Activated naive CD4-positive, alpha-beta T cell treated with anti-CD3 and anti-CD28 coated beads for 36 hours (primary cell): ENCODE measurements at regions of chr17 and their contacts with region 1.

Region 1: GRCh38 chr17:36722121-36722902 is 120.9 kb downstream of the MRM1 start:
- DNase-seq: peak; percentile 87
- H3K4me3 Mint-ChIP-seq: peak overlapping the region; percentile 85
- H3K27ac Mint-ChIP-seq: peak overlapping the region; percentile 97
- H3K4me1 Mint-ChIP-seq: peaks cover 44% of the 10 kb centered on the region
- H3K27me3 Mint-ChIP-seq: no peaks in the 10 kb centered on the region

Region 2: GRCh38 chr17:36545465-36546417 is 176.6 kb before region 1 on chr17:
- CTCF ChIA-PET with region 1: interaction called, 4 read pairs
- intact Hi-C with region 1: loop called (anchors 5 kb)
- DNase-seq: peak; percentile 98
- H3K4me3 Mint-ChIP-seq: peak overlapping the region; percentile 86
- H3K27ac Mint-ChIP-seq: peak overlapping the region; percentile 94
- H3K4me1 Mint-ChIP-seq: peaks cover 44% of the 10 kb centered on the region
- H3K27me3 Mint-ChIP-seq: no peaks in the 10 kb centered on the region

Region 3: GRCh38 chr17:36674278-36674650 is 48.0 kb before region 1 on chr17:
- CTCF ChIA-PET with region 1: no interaction called
- intact Hi-C with region 1: loop called (anchors 2 kb)
- DNase-seq: peak; percentile 74
- H3K4me3 Mint-ChIP-seq: no peak overlapping the region
- H3K27ac Mint-ChIP-seq: peak overlapping the region; percentile 73
- H3K4me1 Mint-ChIP-seq: peaks cover 30% of the 10 kb centered on the region
- H3K27me3 Mint-ChIP-seq: no peaks in the 10 kb centered on the region

Region 4: DNA sequence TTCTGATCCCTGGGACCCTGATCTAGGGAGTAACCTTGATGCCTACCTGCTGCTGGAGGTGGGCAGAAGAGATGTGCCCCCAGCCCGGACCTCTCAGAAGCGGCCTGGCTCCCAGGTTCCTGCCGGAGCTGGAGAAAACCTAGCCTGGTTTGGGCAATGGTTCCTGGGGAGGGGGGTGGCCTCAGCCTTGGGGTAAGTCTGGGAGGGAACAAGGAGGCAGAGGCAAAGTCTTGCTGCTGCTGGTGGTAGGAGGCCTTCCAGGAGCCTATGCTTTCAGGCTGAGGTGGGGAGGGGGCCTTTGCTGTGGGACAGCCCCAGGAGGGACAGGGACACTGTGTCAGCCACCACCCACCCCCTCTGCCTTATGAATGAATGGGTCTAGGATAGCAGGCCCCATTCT is 45.2 kb after region 1 on chr17:
- CTCF ChIA-PET with region 1: no interaction called
- intact Hi-C with region 1: no loop called
- DNase-seq: no peak
- H3K4me3 Mint-ChIP-seq: no peak overlapping the region
- H3K27ac Mint-ChIP-seq: no peak overlapping the region
- H3K4me1 Mint-ChIP-seq: peaks cover 12% of the 10 kb centered on the region
- H3K27me3 Mint-ChIP-seq: no peaks in the 10 kb centered on the region

Region 5: DNA sequence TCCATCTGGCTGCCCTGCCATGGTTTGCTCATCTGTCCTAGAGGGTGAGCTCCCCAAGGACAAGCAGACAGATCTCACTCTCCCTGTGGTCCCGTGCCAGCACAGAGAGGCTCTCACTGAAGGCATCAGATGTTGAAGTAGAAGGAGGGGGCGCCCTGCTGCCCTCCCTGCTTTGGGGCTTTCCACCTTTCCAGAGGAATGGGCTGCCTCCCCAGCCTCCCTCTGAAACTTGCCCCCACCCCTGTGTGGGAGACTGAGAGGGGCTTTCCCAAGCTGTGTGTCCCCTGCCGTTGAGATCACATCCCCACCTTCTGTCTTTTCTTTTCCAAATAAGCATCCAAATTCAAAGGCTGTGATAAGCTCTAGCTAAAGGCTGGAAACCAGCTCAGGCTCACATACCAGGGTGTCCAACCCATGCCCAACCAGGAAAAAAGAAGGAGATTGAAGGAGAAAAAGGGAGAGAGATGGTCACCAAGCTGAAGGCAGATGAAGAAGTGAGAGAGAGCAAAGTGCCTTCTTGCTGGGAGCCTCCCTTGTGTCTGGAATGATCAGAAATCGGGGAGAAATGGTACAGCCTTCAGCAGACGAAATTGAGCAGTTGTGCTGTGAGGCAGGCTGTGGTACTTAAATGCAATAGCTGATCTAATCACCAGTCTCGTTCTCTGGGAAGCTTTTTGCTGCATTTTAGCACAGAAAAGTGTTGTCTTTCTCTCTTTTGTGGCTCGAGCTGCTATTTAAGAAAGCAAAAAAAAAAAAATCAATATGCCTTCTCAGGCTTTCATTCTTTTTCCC is 69.0 kb after region 1 on chr17:
- CTCF ChIA-PET with region 1: no interaction called
- intact Hi-C with region 1: no loop called
- DNase-seq: no peak
- H3K4me3 Mint-ChIP-seq: no peak overlapping the region
- H3K27ac Mint-ChIP-seq: no peak overlapping the region
- H3K4me1 Mint-ChIP-seq: no peaks in the 10 kb centered on the region
- H3K27me3 Mint-ChIP-seq: peaks cover 7% of the 10 kb centered on the region

Region 6: GRCh38 chr17:36849871-36850348 is 127.6 kb after region 1 on chr17:
- CTCF ChIA-PET with region 1: no interaction called
- intact Hi-C with region 1: loop called (anchors 5 kb)
- DNase-seq: peak; percentile 80
- H3K4me3 Mint-ChIP-seq: no peak overlapping the region
- H3K27ac Mint-ChIP-seq: peak overlapping the region; percentile 79
- H3K4me1 Mint-ChIP-seq: peaks cover 29% of the 10 kb centered on the region
- H3K27me3 Mint-ChIP-seq: peaks cover 15% of the 10 kb centered on the region

Region 7: DNA sequence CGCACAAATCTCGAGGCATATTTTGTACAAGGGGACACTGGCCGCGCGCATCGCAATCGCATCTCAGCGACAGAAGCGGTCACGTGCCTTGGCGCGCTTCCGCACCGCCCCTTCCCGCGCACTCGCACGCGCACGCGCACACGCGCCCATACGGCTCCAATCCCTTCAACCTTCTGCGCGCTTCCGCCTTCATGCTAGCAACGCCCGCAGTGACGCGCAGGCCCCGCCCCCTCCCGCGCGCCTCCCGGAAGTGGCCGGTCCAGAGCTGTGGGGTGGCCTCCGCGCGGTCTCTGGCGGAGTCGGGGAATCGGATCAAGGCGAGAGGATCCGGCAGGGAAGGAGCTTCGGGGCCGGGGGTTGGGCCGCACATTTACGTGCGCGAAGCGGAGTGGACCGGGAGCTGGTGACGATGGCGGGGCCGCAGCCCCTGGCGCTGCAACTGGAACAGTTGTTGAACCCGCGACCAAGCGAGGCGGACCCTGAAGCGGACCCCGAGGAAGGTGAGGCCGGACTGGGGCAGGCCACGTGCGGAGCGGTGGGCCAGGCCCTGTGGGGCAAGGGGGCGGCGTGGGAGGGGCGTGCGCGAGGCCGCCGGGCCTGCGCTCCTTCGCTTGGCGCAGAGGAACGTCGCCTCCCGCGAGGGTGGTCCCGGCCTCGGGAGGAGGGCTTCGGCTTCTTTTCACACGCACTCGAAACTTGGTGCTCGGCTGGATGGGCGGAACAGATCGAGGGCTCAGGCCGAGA is 226.6 kb after region 1 on chr17 and contains the start of gene AATF:
- CTCF ChIA-PET with region 1: no interaction called
- intact Hi-C with region 1: loop called (anchors 1 kb)
- DNase-seq: peak; percentile 96
- H3K4me3 Mint-ChIP-seq: peak within 1 kb of the TSS; percentile 93
- H3K27ac Mint-ChIP-seq: peak within 1 kb of the TSS; percentile 87
- H3K4me1 Mint-ChIP-seq: peaks cover 39% of the 10 kb centered on the region
- H3K27me3 Mint-ChIP-seq: peaks cover 28% of the 10 kb centered on the region
- total RNA-seq, gene AATF: 58.9 to 69.8 TPM

Region 8: GRCh38 chr17:37358830-37359681 is 636.7 kb after region 1 on chr17:
- CTCF ChIA-PET with region 1: no interaction called
- intact Hi-C with region 1: loop called (anchors 1 kb)
- DNase-seq: peak; percentile 95
- H3K4me3 Mint-ChIP-seq: peak overlapping the region; percentile 86
- H3K27ac Mint-ChIP-seq: peak overlapping the region; percentile 76
- H3K4me1 Mint-ChIP-seq: peaks cover 21% of the 10 kb centered on the region
- H3K27me3 Mint-ChIP-seq: no peaks in the 10 kb centered on the region

Region 9: DNA sequence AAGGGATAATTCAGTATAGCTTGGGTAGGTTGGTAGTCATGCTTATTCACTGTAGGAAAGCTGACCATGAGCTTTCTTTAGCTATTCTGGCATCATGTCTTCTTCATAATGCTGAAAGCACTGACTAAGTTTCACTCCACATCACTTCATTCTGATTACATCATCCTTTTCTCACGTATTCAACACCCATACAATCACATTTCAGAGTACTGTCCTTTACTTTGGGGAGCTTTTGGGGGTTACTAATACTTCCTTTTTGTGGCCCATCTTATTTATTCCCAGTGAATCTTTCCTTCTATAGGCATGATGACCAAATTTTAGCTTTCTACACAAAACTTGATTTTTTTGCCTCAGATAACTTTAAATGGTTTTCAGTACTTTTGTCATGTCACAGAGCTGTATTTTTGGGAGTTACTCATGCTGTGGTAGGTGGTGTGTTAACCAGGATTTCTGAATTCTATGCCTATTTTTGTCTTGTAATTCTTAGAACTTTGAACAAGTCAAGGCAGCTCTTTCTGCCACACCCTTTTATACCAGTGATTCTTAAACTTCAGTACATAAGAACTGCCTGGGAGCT is 707.8 kb after region 1 on chr17:
- CTCF ChIA-PET with region 1: no interaction called
- intact Hi-C with region 1: loop called (anchors 1 kb)
- DNase-seq: no peak
- H3K4me3 Mint-ChIP-seq: peak overlapping the region; percentile 1
- H3K27ac Mint-ChIP-seq: peak overlapping the region; percentile 89
- H3K4me1 Mint-ChIP-seq: peaks cover 23% of the 10 kb centered on the region
- H3K27me3 Mint-ChIP-seq: no peaks in the 10 kb centered on the region